Heart left ventricle (tissue), 16 donors: ENCODE measurements at regions of chr9 and their contacts with region 1.

Region 1: DNA sequence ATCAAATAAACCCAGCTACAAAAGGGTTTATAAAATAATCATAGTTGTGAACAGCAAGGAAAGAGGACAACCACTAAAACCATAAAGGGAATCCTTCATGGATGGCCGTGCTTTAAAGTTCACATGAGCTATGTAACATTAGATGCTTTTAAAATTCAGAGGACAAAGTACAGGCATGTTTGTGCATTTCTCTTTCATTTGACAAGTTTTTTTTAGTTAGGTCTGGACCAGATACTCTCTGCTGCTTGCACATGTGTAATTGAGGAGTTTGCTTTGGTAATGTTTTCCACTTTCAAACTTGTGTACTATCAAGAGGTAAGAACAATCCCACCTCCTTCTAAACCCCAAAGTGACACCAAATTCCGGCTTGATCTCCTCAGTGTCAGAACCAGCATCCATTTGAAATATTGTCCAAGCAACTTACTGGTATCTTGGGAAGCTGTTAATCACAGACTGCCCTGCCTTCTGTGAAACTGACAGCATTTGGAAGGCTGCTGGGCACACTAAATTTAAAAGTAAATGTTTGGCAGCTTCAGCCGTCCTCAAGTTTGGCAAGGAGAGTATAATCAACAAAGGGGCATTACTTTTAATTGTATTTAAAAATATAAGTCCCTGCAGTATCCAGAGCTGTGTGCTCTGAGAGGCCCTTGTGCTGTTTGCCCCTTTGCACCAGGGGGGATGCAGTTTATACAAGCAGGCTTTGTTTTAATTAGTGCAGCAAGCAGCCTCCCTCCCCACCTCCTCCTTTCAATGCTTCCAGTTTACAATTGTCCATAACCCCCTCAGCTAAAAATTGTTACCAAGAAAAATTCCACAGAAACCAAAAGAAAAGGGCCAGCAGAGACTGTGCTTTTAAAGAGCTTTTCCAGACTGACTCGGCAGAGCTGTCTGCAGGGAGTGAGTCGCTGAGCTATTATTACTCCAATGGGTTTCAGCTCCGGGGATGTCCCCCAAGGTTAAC is 328.3 kb upstream of the MPDZ start:
- DNase-seq: peak in 3 of 5 donors; percentile 34 to 56 (median 55)
- ATAC-seq: peak; percentile 83 to 93 (median 90)
- H3K4me3 ChIP-seq: peak overlapping the region in 9 of 12 donors; percentile 4 to 40 (median 26)
- H3K27ac ChIP-seq: peak overlapping the region; percentile 59 to 91 (median 82)
- H3K4me1 ChIP-seq: peaks cover 0 to 48% (median 34%) of the 10 kb centered on the region in 12 donors
- H3K27me3 ChIP-seq: no peaks in the 10 kb centered on the region
- CTCF ChIP-seq: no peak
- POLR2A ChIP-seq: no peak

Region 2: GRCh38 chr9:13552606-13553215 is 55.0 kb before region 1 on chr9:
- intact Hi-C with region 1: loop called in 2 of 10 experiments (anchors 5 to 10 kb)
- DNase-seq: no peak
- ATAC-seq: peak; percentile 77 to 91 (median 82)
- H3K4me3 ChIP-seq: no peak overlapping the region
- H3K27ac ChIP-seq: peak overlapping the region in 4 of 12 donors; percentile 4 to 38 (median 23)
- H3K4me1 ChIP-seq: peaks cover 0 to 27% (median 0%) of the 10 kb centered on the region in 12 donors
- H3K27me3 ChIP-seq: no peaks in the 10 kb centered on the region
- CTCF ChIP-seq: no peak
- POLR2A ChIP-seq: no peak

Region 3: DNA sequence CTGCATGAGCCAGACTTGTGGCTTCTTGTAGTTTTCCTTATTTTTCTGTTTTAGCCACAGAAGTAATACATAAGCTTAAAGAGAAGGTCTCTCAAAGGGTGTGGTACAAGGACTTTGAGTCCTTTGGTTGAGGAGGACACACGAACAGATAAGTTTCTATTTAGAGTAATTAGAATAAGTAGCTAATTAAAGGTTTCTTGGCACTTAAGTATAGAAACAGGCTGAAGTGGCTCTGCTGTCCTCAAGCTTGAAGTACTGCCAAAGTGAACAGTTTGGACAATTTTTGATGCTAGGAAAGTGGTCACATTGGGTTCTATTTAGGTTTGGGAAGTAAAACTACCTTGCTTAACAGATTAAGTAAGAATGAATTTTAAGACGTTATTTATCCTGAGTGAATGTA is 50.0 kb before region 1 on chr9:
- intact Hi-C with region 1: loop called in 1 of 10 experiments (anchors 5 kb)
- DNase-seq: no peak
- ATAC-seq: peak; percentile 80 to 91 (median 88)
- H3K4me3 ChIP-seq: no peak overlapping the region
- H3K27ac ChIP-seq: peak overlapping the region in 11 of 12 donors; percentile 4 to 69 (median 39)
- H3K4me1 ChIP-seq: peaks cover 0 to 27% (median 0%) of the 10 kb centered on the region in 12 donors
- H3K27me3 ChIP-seq: no peaks in the 10 kb centered on the region
- CTCF ChIP-seq: no peak
- POLR2A ChIP-seq: no peak

Region 4: GRCh38 chr9:13648676-13649075 is 40.9 kb after region 1 on chr9:
- intact Hi-C with region 1: loop called in 2 of 10 experiments (anchors 5 kb)
- DNase-seq: no peak
- ATAC-seq: no peak
- H3K4me3 ChIP-seq: no peak overlapping the region
- H3K27ac ChIP-seq: no peak overlapping the region
- H3K4me1 ChIP-seq: peaks cover 0 to 23% (median 7%) of the 10 kb centered on the region in 12 donors
- H3K27me3 ChIP-seq: no peaks in the 10 kb centered on the region
- CTCF ChIP-seq: no peak
- POLR2A ChIP-seq: no peak

Region 5: GRCh38 chr9:13665418-13666066 is 57.8 kb after region 1 on chr9:
- intact Hi-C with region 1: loop called in 2 of 10 experiments (anchors 10 kb)
- DNase-seq: no peak
- ATAC-seq: peak in 1 of 4 donors; percentile 65
- H3K4me3 ChIP-seq: peak overlapping the region in 1 of 12 donors; percentile 13
- H3K27ac ChIP-seq: no peak overlapping the region
- H3K4me1 ChIP-seq: peaks cover 0 to 12% (median 2%) of the 10 kb centered on the region in 12 donors
- H3K27me3 ChIP-seq: no peaks in the 10 kb centered on the region
- CTCF ChIP-seq: no peak
- POLR2A ChIP-seq: no peak

Region 6: DNA sequence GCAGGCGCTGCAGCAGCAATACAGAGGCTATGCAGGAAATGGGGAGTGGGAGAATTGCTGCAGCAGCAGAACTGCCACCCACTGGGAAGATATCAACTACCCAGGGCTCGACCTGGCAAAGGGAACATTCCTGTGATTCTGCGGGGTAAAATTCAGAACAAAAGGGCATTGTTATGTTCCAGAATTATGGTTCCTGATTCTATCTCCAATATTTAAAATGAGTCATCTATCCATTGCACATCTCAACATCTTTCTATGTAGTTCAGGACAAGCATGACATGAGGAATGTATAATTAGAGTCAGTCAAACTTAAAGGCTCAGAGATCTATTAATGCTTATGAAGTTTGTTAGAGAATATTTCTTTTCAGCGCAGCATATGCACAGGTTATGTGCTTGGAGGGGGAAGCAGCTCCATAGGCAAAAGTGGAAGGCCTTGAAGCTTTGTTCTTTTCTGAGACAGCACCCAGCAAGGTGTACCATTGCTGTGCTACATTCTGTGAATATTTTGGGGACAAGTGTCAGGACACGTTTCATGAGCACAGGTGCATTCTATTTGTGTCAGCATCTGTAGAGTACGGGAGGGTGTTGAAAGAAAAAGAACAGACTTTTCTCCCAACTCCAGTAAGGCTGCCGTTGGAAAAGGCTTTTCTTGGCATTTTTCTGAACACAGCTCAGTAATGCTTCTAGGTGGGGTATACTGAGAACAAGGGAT is 67.3 kb after region 1 on chr9:
- intact Hi-C with region 1: loop called in 2 of 10 experiments (anchors 5 to 10 kb)
- DNase-seq: no peak
- ATAC-seq: peak; percentile 37 to 65 (median 58)
- H3K4me3 ChIP-seq: no peak overlapping the region
- H3K27ac ChIP-seq: peak overlapping the region in 9 of 12 donors; percentile 38 to 76 (median 58)
- H3K4me1 ChIP-seq: peaks cover 0 to 18% (median 0%) of the 10 kb centered on the region in 12 donors
- H3K27me3 ChIP-seq: no peaks in the 10 kb centered on the region
- CTCF ChIP-seq: no peak
- POLR2A ChIP-seq: no peak

Region 7: DNA sequence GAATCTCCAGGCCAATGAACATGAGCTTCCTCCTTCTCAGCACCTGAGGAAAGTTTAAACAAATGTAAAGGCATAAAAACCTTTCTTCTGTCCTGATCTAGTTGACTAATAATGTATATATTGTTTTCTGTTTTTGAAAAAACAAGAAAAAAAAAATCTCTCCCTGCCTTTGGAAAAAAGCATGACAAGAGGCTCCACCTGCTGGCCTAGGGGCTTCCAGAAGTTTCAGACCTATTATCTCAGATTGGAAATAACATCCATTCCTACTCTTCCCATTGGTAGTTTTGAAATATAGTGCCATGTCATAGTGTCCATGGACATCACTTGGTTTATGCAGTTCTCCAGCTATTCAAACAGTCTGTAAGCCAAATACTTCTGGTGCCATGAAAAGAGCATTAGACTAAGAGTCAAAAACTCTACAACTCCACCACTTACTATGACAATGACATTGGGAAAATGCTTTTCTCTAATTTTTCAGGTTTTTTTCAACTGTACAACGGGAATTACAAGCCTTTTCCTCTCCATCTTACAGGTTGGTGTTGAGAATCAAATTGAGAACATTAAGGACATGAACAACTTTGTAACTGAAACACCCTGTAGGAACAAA is 81.3 kb after region 1 on chr9:
- intact Hi-C with region 1: loop called in 1 of 10 experiments (anchors 5 kb)
- DNase-seq: peak in 1 of 5 donors; percentile 32
- ATAC-seq: peak in 1 of 4 donors; percentile 23
- H3K4me3 ChIP-seq: no peak overlapping the region
- H3K27ac ChIP-seq: peak overlapping the region in 6 of 12 donors; percentile 1 to 33 (median 16)
- H3K4me1 ChIP-seq: peaks cover 0 to 30% (median 12%) of the 10 kb centered on the region in 12 donors
- H3K27me3 ChIP-seq: no peaks in the 10 kb centered on the region
- CTCF ChIP-seq: peak; percentile 35 to 64 (median 54)
- POLR2A ChIP-seq: no peak